ENCODE measurements at regions of chr12 and their contacts with region 1.

Region 1: DNA sequence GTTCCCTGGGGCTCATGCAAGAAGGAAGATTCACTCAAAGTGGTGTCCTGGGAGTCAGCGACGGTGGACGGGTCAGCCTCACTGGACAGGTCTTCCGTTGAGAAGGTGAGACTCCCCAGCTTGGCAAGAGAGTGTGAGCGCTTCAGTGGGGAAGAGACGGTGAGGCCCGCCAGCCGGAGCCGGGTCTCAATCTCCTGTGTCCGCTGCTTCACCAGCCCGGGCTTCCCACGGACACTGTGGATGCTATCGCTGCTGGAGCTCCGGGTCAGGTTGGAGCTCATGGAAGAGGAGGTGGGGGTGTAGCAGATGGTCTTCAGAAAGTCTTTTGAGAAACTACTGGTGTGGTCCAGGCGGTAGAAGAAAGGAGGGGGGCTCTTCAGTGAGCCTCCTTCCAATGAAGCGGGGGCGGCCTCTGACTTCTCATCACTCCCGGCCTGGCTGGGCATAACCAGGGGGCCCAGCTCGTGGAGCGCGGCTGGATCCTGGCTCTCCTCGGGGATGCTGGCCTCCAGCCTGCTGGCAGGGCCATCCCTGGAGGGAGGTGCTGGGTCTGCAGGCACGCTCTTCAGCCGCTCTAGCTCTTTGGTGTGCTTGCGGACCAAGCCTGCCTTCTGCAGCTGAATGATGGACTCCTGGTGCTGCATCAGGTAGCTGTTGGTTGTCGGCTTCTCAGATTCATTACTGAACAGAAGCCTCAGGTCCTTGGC is 56.9 kb upstream of the CORO1C start:
- DNase-seq: peak; percentile 63 to 81 (median 73)
- ATAC-seq: peak; percentile 59 to 80 (median 71)
- H3K4me3 ChIP-seq: no peak overlapping the region
- H3K27ac ChIP-seq: peak overlapping the region in 11 of 12 donors; percentile 10 to 81 (median 44)
- H3K4me1 ChIP-seq: peaks cover 7 to 76% (median 50%) of the 10 kb centered on the region in 12 donors
- H3K27me3 ChIP-seq: no peaks in the 10 kb centered on the region
- CTCF ChIP-seq: no peak
- POLR2A ChIP-seq: no peak

Region 2: GRCh38 chr12:108691175-108691997 is 96.8 kb before region 1 on chr12:
- intact Hi-C with region 1: loop called in 2 of 10 experiments (anchors 5 kb)
- DNase-seq: peak; percentile 94 to 98 (median 95)
- ATAC-seq: peak; percentile 91 to 97 (median 94)
- H3K4me3 ChIP-seq: peak overlapping the region in 9 of 12 donors; percentile 13 to 39 (median 30)
- H3K27ac ChIP-seq: peak overlapping the region; percentile 84 to 96 (median 94)
- H3K4me1 ChIP-seq: peaks cover 18 to 95% (median 72%) of the 10 kb centered on the region in 12 donors
- H3K27me3 ChIP-seq: no peaks in the 10 kb centered on the region
- CTCF ChIP-seq: peak in 11 of 12 donors; percentile 7 to 55 (median 37)
- POLR2A ChIP-seq: no peak

Measured in heart left ventricle (tissue), 16 donors.